AG04449 (cell line): ENCODE measurements at regions of chr14 and their contacts with region 1.

Region 1: DNA sequence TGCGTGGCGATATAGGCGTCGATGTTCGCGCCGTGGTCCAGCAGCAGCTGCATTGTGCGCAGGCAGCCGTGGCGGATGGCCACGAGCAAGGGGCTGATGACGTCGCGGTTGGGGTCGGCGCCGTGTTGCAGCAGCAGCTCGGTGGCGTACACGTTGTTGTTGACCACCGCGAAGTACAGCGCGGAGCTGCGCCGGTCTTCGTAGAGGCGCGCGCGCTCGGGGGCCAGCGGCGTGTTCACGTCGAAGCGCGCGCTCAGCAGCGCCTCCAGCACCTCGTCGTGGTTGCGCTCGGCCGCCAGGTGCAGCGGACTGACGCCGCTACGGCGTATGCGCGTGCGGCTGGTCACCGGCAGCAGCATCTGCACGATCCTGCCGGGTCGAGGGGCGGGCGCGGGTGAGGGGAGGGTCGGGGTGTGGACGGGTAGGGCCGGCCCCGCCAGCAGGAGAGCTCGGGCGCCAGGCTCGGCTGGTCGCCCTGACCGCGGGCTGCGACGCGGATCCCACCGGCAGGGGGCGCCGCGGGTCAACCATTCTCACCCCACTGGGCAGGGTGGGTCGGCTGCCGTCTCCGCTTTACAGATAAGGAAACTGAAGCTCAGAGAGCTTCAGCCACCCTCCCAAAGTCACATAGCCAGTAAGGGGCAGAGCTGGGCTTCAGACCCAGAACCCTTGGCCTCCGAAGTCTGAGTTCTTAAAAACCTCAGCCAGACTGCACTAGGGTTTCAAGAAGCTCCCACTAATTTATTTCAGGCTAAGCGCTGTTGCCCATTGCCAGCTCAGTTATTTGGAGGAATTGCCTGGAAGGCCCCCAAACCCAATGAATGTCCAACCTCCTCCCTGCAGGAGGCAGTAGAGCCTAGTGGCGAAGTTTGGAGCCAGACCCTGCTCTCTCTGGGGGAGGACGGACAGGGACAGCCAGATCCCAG is 12.4 kb downstream of the FAM181A start:
- DNase-seq: no peak
- H3K4me3 ChIP-seq: peak overlapping the region; percentile 50
- CTCF ChIP-seq: peak; percentile 85

Region 2: DNA sequence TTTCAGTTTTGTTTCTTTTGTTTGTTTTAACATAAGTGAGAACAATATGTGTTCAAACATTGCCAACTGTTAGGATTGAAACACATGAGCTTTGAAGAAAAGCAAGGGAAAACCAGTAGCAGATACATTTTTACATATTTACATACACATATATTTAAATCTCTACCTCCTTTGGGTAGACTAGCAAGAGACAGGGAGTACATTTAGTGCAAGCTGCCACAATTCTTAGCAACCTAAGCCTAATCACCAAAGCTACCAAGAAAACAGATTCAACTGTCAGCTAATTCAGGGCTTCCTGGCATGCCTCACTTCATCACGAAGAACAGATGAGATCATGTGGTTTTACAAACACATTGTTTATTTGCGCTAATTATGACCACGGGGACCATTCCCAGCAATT is 294.4 kb before region 1 on chr14:
- CTCF ChIA-PET with region 1: no interaction called
- POLR2A ChIA-PET with region 1: no interaction called
- DNase-seq: no peak
- H3K4me3 ChIP-seq: no peak overlapping the region
- CTCF ChIP-seq: no peak

Region 3: GRCh38 chr14:93655078-93655750 is 284.4 kb before region 1 on chr14:
- CTCF ChIA-PET with region 1: interaction called, 10 read pairs
- POLR2A ChIA-PET with region 1: no interaction called
- DNase-seq: peak; percentile 3
- H3K4me3 ChIP-seq: no peak overlapping the region
- CTCF ChIP-seq: peak; percentile 27

Region 4: DNA sequence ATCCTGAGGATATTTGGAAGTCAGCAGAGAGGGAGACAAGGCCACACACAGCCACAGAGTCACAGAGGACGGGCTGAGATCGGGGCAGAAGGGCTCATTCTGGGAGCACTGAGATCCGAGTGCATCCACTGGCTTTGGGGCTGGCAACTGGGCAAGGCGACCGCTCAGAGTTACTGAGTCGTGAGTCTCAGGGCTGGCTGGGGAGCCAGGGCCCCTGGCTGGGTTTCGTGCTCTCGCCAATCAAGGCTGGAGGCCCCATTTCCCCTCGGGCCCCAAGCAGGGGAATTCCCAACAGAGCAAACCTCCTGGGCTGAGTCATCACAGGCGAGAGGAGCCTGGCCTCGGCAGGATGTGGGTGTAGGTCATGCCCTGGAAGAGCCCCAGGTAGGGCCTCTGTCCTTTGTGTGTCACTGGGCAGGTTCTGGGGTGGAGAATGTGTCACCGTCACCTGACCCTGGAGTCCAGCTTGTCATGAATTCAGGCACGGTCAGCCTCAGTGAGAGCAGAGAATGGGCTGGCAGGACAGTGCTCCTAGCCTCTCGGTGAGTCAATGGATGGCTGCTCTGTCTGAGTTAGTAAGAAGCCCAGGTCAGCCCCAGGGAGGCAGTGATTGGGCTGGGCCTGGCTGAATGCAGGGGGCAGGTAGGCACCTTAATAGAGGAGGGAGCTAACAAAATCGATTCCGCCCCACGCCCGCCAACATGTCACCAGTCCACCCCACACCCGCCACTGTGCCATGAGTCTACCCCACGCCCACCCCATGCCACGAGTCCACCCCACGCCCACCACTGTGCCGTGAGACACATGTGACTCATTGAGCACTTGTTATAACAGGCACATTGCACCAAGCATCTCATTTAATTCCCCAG is 19.9 kb after region 1 on chr14:
- CTCF ChIA-PET with region 1: interaction called, 135 read pairs
- POLR2A ChIA-PET with region 1: no interaction called
- DNase-seq: peak; percentile 67
- H3K4me3 ChIP-seq: no peak overlapping the region
- CTCF ChIP-seq: no peak

Region 5: DNA sequence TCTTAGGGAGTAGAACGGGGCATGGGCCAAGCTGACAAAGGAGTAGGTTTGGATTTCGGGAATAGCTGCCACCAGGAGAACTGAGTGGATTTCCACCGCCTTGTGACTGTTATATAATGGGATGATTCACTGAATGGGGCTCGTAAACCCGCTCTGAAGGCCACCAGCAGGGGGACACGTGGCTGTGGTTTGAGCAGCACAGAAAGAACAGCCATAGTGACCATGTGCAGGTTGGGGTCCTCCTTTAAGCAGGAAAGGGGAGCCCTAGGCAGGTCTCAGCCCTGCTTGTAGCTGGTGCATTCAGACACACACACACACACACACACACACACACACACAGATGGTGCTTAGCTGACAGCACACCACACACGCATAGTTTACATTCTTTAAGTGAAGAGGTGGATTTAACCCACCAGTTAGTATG is 45.4 kb after region 1 on chr14:
- CTCF ChIA-PET with region 1: interaction called, 55 read pairs
- POLR2A ChIA-PET with region 1: no interaction called
- DNase-seq: peak; percentile 92
- H3K4me3 ChIP-seq: no peak overlapping the region
- CTCF ChIP-seq: peak; percentile 41

Region 6: GRCh38 chr14:94021001-94021400 is 81.4 kb after region 1 on chr14:
- CTCF ChIA-PET with region 1: interaction called, 13 read pairs
- POLR2A ChIA-PET with region 1: interaction called, 3 read pairs
- DNase-seq: no peak
- H3K4me3 ChIP-seq: no peak overlapping the region
- CTCF ChIP-seq: no peak

Region 7: DNA sequence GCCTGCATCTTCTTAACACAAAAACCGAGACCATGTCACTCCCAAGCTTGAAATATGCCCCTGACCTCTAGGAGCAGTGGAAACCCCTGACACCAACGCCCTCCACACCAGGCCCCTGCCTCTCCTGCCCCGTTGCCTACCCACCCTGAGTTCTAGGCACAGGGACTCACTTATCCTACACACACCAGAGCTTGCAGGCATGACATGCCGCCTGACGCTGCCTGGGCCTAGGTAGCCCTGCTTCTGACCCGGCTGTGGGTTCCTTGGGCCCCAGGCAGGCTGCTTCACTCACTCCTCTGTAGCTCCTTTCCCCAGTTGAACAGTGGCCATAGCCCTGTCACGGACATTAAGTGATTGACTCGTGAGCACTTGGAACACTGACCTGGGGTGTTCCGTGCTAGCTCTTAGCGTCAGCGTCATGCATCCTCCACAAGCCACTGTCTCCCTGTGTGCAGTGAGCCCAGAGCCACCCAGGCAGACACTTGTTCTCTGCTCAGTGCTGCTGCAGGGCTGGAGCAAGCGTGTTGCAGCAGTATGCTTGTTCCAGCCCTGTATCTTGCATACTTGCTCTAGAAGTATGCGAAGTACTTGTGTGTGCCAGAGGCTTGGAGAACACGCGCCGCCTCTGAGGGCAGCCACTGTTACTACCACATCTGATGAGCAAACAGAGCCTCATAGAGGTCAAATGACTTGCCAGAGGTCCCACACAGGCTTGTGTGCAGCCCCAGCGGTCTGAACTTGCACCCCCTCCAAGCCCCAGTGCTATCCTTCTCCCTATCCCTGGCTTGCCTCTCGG is 102.2 kb after region 1 on chr14:
- CTCF ChIA-PET with region 1: interaction called, 46 read pairs
- POLR2A ChIA-PET with region 1: no interaction called
- DNase-seq: peak; percentile 23
- H3K4me3 ChIP-seq: no peak overlapping the region
- CTCF ChIP-seq: no peak

Region 8: GRCh38 chr14:94143239-94143638 is 203.7 kb after region 1 on chr14:
- CTCF ChIA-PET with region 1: interaction called, 83 read pairs
- POLR2A ChIA-PET with region 1: no interaction called
- DNase-seq: no peak
- H3K4me3 ChIP-seq: no peak overlapping the region
- CTCF ChIP-seq: peak; percentile 25